ENCODE measurements at regions of chr10 and their contacts with region 1.

Region 1: GRCh38 chr10:67884313-67884841 is at the start of gene SIRT1:
- DNase-seq: peak; percentile 88 to 94 (median 92)
- H3K4me3 ChIP-seq: peak within 1 kb of the TSS; percentile 60
- H3K4me3 Mint-ChIP-seq: peak within 1 kb of the TSS; percentile 84 to 98 (median 92)
- H3K27ac ChIP-seq: peak within 1 kb of the TSS; percentile 84
- H3K27ac Mint-ChIP-seq: peak within 1 kb of the TSS; percentile 92 to 98 (median 96)
- H3K4me1 ChIP-seq: peaks cover 32% of the 10 kb centered on the region
- H3K4me1 Mint-ChIP-seq: peaks cover 37 to 45% (median 40%) of the 10 kb centered on the region in 3 donors
- H3K27me3 ChIP-seq: no peaks in the 10 kb centered on the region
- H3K27me3 Mint-ChIP-seq: no peaks in the 10 kb centered on the region
- total RNA-seq, gene SIRT1: 24.8 to 26.5 TPM

Region 2: GRCh38 chr10:67764012-67764822 is 120.2 kb before region 1 on chr10:
- CTCF ChIA-PET with region 1: no interaction called
- POLR2A ChIA-PET with region 1: no interaction called
- DNase-seq: peak; percentile 90 to 98 (median 96)
- H3K4me3 ChIP-seq: peak overlapping the region; percentile 98
- H3K4me3 Mint-ChIP-seq: peak overlapping the region; percentile 87 to 97 (median 92)
- H3K27ac ChIP-seq: peak overlapping the region; percentile 86
- H3K27ac Mint-ChIP-seq: peak overlapping the region; percentile 94 to 99 (median 98)
- H3K4me1 ChIP-seq: peaks cover 10% of the 10 kb centered on the region
- H3K4me1 Mint-ChIP-seq: peaks cover 12 to 14% (median 14%) of the 10 kb centered on the region in 3 donors
- H3K27me3 ChIP-seq: no peaks in the 10 kb centered on the region
- H3K27me3 Mint-ChIP-seq: peaks cover 4 to 14% of the 10 kb centered on the region in 2 donors

Region 3: GRCh38 chr10:67849331-67850011 is 34.9 kb before region 1 on chr10:
- CTCF ChIA-PET with region 1: interaction called, 25 read pairs
- POLR2A ChIA-PET with region 1: interaction called, 9 read pairs
- DNase-seq: peak; percentile 83 to 96 (median 85)
- H3K4me3 ChIP-seq: peak overlapping the region; percentile 86
- H3K4me3 Mint-ChIP-seq: peak overlapping the region; percentile 88 to 96 (median 94)
- H3K27ac ChIP-seq: peak overlapping the region; percentile 77
- H3K27ac Mint-ChIP-seq: peak overlapping the region; percentile 79 to 98 (median 96)
- H3K4me1 ChIP-seq: peaks cover 5% of the 10 kb centered on the region
- H3K4me1 Mint-ChIP-seq: peaks cover 8 to 11% (median 10%) of the 10 kb centered on the region in 3 donors
- H3K27me3 ChIP-seq: no peaks in the 10 kb centered on the region
- H3K27me3 Mint-ChIP-seq: peaks cover 0 to 3% of the 10 kb centered on the region in 2 donors

Measured in CD8-positive, alpha-beta memory T cell (primary cell).